ENCODE measurements at regions of chr1 and their contacts with region 1.

Region 1: DNA sequence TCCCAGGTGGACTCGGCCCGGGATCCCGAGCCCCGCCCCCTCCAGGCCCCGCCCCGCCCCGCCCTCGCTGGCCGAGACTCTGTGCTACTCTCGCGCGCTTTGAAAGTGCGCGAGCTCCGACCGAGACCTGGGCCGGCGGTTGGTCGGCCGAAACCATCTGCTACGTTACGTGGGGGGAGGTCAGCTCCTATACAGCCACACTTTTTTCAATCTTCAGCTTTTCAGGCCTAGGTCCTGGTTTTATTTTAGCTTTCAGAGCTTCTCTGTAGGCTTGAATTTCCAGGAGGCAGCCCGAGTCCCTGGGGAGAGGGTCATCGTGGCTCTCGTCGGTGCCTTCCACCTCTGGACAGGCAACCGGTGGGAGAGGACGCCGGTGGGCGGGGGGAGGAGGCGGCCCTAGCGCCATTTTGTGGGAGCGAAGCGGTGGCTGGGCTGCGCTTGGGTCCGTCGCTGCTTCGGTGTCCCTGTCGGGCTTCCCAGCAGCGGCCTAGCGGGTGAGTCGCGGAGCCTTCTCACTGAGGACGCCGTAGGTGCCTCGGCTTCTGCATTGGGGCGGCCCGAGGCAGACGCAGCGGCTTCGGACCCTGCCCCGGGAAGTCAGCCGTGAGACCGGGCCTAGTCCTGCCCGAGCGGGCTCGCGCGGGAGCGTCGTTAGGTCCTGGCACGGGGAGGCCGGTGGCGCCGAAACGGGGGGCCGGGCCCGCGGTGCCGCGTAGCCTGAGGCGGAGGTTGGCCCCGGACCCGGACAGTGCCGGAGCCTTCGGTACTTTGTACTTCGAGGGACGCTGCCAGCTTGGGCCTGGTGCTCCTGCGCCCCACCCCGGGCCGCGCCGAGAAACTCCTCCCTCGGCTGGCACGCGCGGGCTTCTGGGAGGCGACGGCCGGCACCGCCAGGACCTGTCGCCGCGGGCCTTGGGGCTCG is at the start of gene TARDBP:
- DNase-seq: peak; percentile 86 to 95 (median 92)
- H3K4me3 ChIP-seq: peak within 1 kb of the TSS; percentile 76
- H3K4me3 Mint-ChIP-seq: peak within 1 kb of the TSS; percentile 91 to 97 (median 91)
- H3K27ac ChIP-seq: peak within 1 kb of the TSS; percentile 95
- H3K27ac Mint-ChIP-seq: peak within 1 kb of the TSS; percentile 97 to 100 (median 98)
- H3K4me1 ChIP-seq: peaks cover 25% of the 10 kb centered on the region
- H3K4me1 Mint-ChIP-seq: peaks cover 26 to 42% (median 28%) of the 10 kb centered on the region in 3 donors
- H3K27me3 ChIP-seq: no peaks in the 10 kb centered on the region
- H3K27me3 Mint-ChIP-seq: no peaks in the 10 kb centered on the region
- total RNA-seq, gene TARDBP: 215 to 239 TPM

Region 2: GRCh38 chr1:11059990-11060830 is 47.7 kb after region 1 on chr1 and contains the start of gene SRM:
- CTCF ChIA-PET with region 1: interaction called, 4 read pairs
- POLR2A ChIA-PET with region 1: interaction called, 18 read pairs
- DNase-seq: peak; percentile 86 to 92 (median 90)
- H3K4me3 ChIP-seq: peak within 1 kb of the TSS; percentile 63
- H3K4me3 Mint-ChIP-seq: peak within 1 kb of the TSS; percentile 89 to 97 (median 93)
- H3K27ac ChIP-seq: peak within 1 kb of the TSS; percentile 79
- H3K27ac Mint-ChIP-seq: peak within 1 kb of the TSS; percentile 91 to 99 (median 97)
- H3K4me1 ChIP-seq: peaks cover 25% of the 10 kb centered on the region
- H3K4me1 Mint-ChIP-seq: peaks cover 30 to 40% (median 35%) of the 10 kb centered on the region in 3 donors
- H3K27me3 ChIP-seq: no peaks in the 10 kb centered on the region
- H3K27me3 Mint-ChIP-seq: no peaks in the 10 kb centered on the region
- total RNA-seq, gene SRM: 423 to 438 TPM